Vagina (tissue), 2 donors: ENCODE measurements at regions of chr15 and their contacts with region 1.

Region 1: DNA sequence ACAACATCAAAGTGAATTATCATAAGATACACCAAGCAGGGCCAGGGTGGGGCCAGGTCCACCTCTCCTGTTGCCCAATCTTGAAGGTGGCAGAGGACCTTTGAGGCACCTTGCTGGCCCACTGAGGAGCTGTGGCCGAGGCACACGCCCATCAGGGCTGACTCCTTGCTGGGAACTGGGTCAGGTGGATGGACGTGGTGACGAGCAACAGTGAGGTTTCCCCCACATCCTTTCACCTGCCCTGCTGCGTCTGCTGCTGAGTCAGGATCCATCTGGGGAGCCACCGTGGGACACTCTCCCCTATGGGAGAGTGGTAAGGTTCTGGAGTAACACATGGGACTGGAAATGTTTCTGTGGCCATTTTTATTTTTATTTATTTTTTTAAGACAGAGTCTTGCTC is 17.3 kb upstream of the FURIN start:
- DNase-seq: no peak
- H3K4me3 ChIP-seq: no peak overlapping the region
- H3K27ac ChIP-seq: no peak overlapping the region
- H3K4me1 ChIP-seq: no peaks in the 10 kb centered on the region
- H3K27me3 ChIP-seq: no peaks in the 10 kb centered on the region
- CTCF ChIP-seq: no peak
- POLR2A ChIP-seq: no peak

Region 2: GRCh38 chr15:89321521-89322410 is 1529.3 kb before region 1 on chr15:
- intact Hi-C with region 1: loop called (anchors 5 kb)
- DNase-seq: peak in 1 of 2 donors; percentile 75
- H3K4me3 ChIP-seq: no peak overlapping the region
- H3K27ac ChIP-seq: no peak overlapping the region
- H3K4me1 ChIP-seq: no peaks in the 10 kb centered on the region
- H3K27me3 ChIP-seq: no peaks in the 10 kb centered on the region
- CTCF ChIP-seq: no peak
- POLR2A ChIP-seq: no peak

Region 3: DNA sequence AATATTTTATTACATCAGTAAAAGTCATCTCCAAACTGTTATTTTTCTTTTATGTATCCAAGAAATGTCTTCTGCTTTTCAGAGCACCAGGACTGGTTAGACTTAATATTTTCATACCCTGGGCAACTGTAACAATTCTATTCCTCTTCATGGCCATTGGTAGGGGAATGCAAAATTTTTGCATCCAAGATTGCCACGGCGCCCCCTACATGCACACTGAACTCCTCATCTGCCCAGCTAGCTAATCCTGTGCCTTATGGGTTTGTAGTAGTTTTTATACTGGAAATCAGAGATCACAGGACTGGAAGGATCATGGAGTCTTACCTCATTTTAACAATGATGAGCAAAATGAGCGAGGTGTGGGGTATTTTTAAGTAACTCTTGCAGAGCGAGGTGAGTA is 247.2 kb before region 1 on chr15:
- intact Hi-C with region 1: no loop called
- DNase-seq: no peak
- H3K4me3 ChIP-seq: no peak overlapping the region
- H3K27ac ChIP-seq: no peak overlapping the region
- H3K4me1 ChIP-seq: peaks cover 2% of the 10 kb centered on the region
- H3K27me3 ChIP-seq: no peaks in the 10 kb centered on the region
- CTCF ChIP-seq: peak in 1 of 3 experiments; percentile 35
- POLR2A ChIP-seq: no peak